ENCODE measurements at regions of chr10 and their contacts with region 1.

Region 1: GRCh38 chr10:77179015-77179695 is 458.5 kb downstream of the KCNMA1 start:
- DNase-seq: peak; percentile 74 to 89
- ATAC-seq: peak; percentile 86 to 95
- H3K4me3 ChIP-seq: no peak overlapping the region
- H3K27ac ChIP-seq: peak overlapping the region; percentile 80 to 86 (median 82)
- H3K4me1 ChIP-seq: peaks cover 34 to 51% of the 10 kb centered on the region in 2 donors
- H3K27me3 ChIP-seq: no peaks in the 10 kb centered on the region
- CTCF ChIP-seq: no peak
- POLR2A ChIP-seq: no peak

Region 2: DNA sequence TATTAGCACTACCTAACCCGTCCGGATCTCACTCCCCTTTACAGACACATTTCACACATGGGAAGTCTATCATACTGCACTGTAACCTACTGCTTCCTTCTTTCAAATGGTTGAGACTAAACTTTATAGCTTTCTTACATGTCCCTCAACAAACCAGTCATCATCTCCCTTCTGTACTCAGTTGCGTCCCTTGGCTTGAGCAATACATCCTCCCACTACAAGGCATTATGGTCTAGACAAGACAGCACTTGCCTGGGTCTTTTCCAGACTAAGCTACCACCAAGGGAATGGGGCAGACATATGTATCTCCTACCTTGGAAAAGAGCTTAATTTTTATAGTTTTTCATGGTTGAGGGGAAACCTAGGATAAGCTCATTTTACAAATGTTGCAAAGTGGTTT is 116.8 kb before region 1 on chr10:
- in situ Hi-C with region 1: no loop called
- intact Hi-C with region 1: no loop called
- DNase-seq: no peak
- ATAC-seq: no peak
- H3K4me3 ChIP-seq: no peak overlapping the region
- H3K27ac ChIP-seq: no peak overlapping the region
- H3K4me1 ChIP-seq: no peaks in the 10 kb centered on the region
- H3K27me3 ChIP-seq: no peaks in the 10 kb centered on the region
- CTCF ChIP-seq: no peak
- POLR2A ChIP-seq: no peak

Region 3: GRCh38 chr10:77223526-77224460 is 44.6 kb after region 1 on chr10:
- in situ Hi-C with region 1: no loop called
- intact Hi-C with region 1: loop called (anchors 5 kb)
- DNase-seq: peak; percentile 70 to 84
- ATAC-seq: peak; percentile 87 to 91
- H3K4me3 ChIP-seq: no peak overlapping the region
- H3K27ac ChIP-seq: peak overlapping the region; percentile 70 to 82 (median 74)
- H3K4me1 ChIP-seq: peaks cover 30 to 48% of the 10 kb centered on the region in 2 donors
- H3K27me3 ChIP-seq: no peaks in the 10 kb centered on the region
- CTCF ChIP-seq: no peak
- POLR2A ChIP-seq: peak in 1 of 2 donors; percentile 22

Region 4: DNA sequence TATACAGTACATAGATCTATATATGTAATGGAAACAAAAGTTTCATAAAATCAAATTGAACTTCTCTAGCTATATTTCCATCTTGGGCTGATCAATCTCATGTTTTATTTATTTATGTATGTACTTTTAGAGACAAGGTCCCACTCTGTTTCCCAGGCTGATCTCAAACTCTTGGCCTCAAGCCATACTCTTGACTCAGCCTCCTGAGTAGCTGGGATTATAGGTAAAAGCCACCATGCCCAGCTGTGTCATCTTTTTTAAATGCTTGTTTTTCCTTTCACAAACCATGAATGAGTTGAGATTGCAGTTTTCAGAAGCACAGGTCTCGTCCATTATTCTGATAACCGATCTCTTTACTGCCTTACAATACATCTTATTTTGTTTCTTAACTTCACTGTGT is 57.5 kb after region 1 on chr10:
- in situ Hi-C with region 1: no loop called
- intact Hi-C with region 1: loop called (anchors 5 kb)
- DNase-seq: no peak
- ATAC-seq: no peak
- H3K4me3 ChIP-seq: no peak overlapping the region
- H3K27ac ChIP-seq: no peak overlapping the region
- H3K4me1 ChIP-seq: peaks cover 37 to 39% of the 10 kb centered on the region in 2 donors
- H3K27me3 ChIP-seq: no peaks in the 10 kb centered on the region
- CTCF ChIP-seq: no peak
- POLR2A ChIP-seq: no peak

Region 5: DNA sequence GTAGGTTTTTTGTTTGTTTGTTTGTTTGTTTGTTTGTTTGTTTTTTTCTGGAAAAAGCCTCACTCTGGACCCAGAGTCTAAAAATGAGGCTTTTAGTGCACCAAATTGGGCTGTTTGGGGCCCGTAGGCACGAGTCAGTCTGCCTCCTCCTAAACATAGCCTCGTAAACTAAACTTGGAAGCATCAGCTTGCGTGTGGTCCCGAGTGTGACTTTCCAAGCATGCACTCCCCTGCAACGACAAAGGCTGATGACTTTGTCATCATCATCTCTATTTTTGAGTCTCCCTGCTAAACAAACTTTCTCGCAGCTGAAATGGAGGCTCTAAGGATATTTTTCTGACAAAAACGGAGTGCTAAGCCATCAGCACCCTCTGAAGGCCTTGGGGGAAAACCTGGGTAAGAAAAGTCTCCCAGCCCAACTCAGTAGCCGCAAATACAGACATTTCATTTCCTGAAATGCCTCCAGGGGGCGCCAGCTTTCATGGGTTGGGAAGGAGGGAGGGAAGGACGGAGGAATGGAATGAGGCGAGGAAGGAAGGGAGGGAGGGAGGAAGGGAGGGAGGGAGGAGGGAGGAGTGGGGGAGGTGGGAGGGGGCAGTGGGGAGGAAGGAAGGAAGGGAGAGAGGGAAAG is 212.6 kb after region 1 on chr10:
- in situ Hi-C with region 1: loop called in 3 of 4 experiments (anchors 10 to 25 kb)
- intact Hi-C with region 1: loop called (anchors 5 kb)
- DNase-seq: peak; percentile 55 to 70
- ATAC-seq: peak; percentile 64 to 79
- H3K4me3 ChIP-seq: no peak overlapping the region
- H3K27ac ChIP-seq: peak overlapping the region; percentile 49 to 72 (median 65)
- H3K4me1 ChIP-seq: peaks cover 67 to 68% of the 10 kb centered on the region in 2 donors
- H3K27me3 ChIP-seq: no peaks in the 10 kb centered on the region
- CTCF ChIP-seq: peak; percentile 63 to 72 (median 70)
- POLR2A ChIP-seq: no peak

Region 6: DNA sequence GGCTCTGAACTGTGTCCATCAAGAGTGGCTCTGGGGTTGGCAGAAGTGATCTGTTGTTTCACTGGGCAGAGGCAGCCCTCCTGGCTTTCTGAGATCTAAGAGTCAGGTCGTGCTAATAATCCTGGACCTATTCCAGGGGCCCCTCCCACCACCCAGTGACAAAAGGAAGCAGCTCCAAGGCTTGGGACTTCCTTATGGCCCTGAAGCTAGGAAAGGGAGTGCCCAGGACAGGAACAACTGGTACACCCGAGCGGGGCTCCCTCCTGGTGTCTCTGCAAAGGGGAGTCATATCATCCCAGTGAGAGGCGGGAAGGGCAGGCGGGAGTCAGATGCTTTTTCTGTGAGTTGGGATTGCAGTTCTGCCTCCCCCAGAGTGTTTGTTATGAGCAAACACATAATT is 886.9 kb after region 1 on chr10:
- in situ Hi-C with region 1: no loop called
- intact Hi-C with region 1: no loop called
- DNase-seq: no peak
- ATAC-seq: no peak
- H3K4me3 ChIP-seq: no peak overlapping the region
- H3K27ac ChIP-seq: no peak overlapping the region
- H3K4me1 ChIP-seq: no peaks in the 10 kb centered on the region
- H3K27me3 ChIP-seq: no peaks in the 10 kb centered on the region
- CTCF ChIP-seq: no peak
- POLR2A ChIP-seq: no peak

Measured in gastrocnemius medialis (tissue), 4 donors.